CD4-positive, alpha-beta T cell (primary cell): ENCODE measurements at regions of chr19 and their contacts with region 1.

Region 1: GRCh38 chr19:39514840-39515550 is at the start of gene SELENOV:
- DNase-seq: peak in 4 of 14 experiments; percentile 36 to 53 (median 40)
- ATAC-seq: peak; percentile 61
- H3K4me3 ChIP-seq: peak within 1 kb of the TSS; percentile 45
- H3K4me3 Mint-ChIP-seq: peak within 1 kb of the TSS; percentile 81
- H3K27ac ChIP-seq: no peak within 1 kb of the TSS
- H3K27ac Mint-ChIP-seq: no peak within 1 kb of the TSS
- H3K4me1 ChIP-seq: peaks cover 19% of the 10 kb centered on the region
- H3K4me1 Mint-ChIP-seq: peaks cover 19% of the 10 kb centered on the region
- H3K27me3 ChIP-seq: peaks cover 41 to 45% of the 10 kb centered on the region in 2 experiments
- H3K27me3 Mint-ChIP-seq: peaks cover 61% of the 10 kb centered on the region
- CTCF ChIP-seq: peak; percentile 20
- total RNA-seq, gene SELENOV: not detected

Region 2: GRCh38 chr19:39502640-39503417 is 12.2 kb before region 1 on chr19:
- CTCF ChIA-PET with region 1: interaction called, 18 read pairs
- POLR2A ChIA-PET with region 1: interaction called, 3 read pairs
- intact Hi-C with region 1: no loop called
- DNase-seq: peak; percentile 56 to 94 (median 72)
- ATAC-seq: peak; percentile 79
- H3K4me3 ChIP-seq: no peak overlapping the region
- H3K4me3 Mint-ChIP-seq: no peak overlapping the region
- H3K27ac ChIP-seq: no peak overlapping the region
- H3K27ac Mint-ChIP-seq: no peak overlapping the region
- H3K4me1 ChIP-seq: peaks cover 40% of the 10 kb centered on the region
- H3K4me1 Mint-ChIP-seq: peaks cover 48% of the 10 kb centered on the region
- H3K27me3 ChIP-seq: peaks cover 63 to 77% of the 10 kb centered on the region in 2 experiments
- H3K27me3 Mint-ChIP-seq: peaks cover 82% of the 10 kb centered on the region
- CTCF ChIP-seq: peak; percentile 68

Region 3: DNA sequence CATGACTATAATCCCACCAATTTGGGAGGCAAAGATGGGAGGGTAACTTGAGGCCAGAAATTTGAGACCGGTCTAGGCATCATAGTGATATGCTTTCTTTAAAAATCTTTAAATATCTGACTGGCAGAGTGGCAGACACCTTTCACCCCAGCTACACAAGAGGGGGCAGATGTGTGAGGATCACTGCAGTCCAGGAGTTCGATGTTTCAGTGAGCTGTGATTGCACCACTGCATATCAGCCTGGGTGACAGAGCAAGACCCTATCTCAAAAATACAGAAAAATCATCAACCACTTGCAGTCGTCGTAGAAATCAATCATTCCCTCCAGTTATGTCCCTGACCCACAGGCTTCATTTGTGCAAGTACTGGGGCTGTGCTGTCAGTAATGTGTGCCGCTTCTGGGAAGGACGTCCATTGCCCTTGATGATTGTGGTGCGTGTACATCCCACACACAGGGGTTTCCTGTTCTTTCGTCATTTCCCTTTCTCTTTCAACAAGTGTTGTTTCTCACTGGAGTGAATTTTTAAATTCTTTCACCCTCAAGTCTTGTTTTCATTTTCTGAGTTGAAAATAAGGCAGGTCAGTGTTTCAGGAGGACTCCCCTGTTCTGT is 190.7 kb after region 1 on chr19:
- CTCF ChIA-PET with region 1: no interaction called
- POLR2A ChIA-PET with region 1: no interaction called
- intact Hi-C with region 1: no loop called
- DNase-seq: peak in 8 of 14 experiments; percentile 2 to 65 (median 14)
- ATAC-seq: peak; percentile 56
- H3K4me3 ChIP-seq: no peak overlapping the region
- H3K4me3 Mint-ChIP-seq: no peak overlapping the region
- H3K27ac ChIP-seq: no peak overlapping the region
- H3K27ac Mint-ChIP-seq: peak overlapping the region; percentile 74
- H3K4me1 ChIP-seq: peaks cover 19% of the 10 kb centered on the region
- H3K4me1 Mint-ChIP-seq: peaks cover 30% of the 10 kb centered on the region
- H3K27me3 ChIP-seq: peaks cover 0 to 3% of the 10 kb centered on the region in 2 experiments
- H3K27me3 Mint-ChIP-seq: peaks cover 11% of the 10 kb centered on the region
- CTCF ChIP-seq: no peak